ENCODE measurements at regions of chr11 and their contacts with region 1.

Region 1: GRCh38 chr11:66855574-66856495 is 1.0 kb upstream of the LRFN4 start:
- DNase-seq: peak; percentile 97
- ATAC-seq: peak; percentile 96

Region 2: DNA sequence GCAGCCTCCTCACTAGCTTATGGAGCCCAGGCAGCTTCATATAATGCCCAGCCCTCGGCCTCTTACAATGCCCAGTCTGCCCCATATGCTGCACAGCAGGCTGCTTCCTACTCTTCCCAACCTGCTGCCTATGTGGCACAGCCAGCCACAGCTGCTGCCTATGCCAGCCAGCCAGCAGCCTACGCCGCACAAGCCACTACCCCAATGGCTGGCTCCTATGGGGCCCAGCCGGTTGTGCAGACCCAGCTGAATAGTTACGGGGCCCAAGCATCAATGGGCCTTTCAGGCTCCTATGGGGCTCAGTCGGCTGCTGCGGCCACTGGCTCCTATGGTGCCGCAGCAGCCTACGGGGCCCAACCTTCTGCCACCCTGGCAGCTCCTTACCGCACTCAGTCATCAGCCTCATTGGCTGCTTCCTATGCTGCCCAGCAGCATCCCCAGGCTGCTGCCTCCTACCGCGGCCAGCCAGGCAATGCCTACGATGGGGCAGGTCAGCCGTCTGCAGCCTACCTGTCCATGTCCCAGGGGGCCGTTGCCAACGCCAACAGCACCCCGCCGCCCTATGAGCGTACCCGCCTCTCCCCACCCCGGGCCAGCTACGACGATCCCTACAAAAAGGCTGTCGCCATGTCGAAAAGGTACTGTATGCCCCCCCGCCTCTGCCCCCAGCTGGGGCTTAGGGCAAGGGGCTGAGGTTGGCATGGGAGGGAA is 230.6 kb before region 1 on chr11:
- intact Hi-C with region 1: no loop called
- DNase-seq: no peak
- ATAC-seq: no peak

Region 3: GRCh38 chr11:66958232-66958955 is 102.6 kb after region 1 on chr11 and contains the start of gene PC:
- intact Hi-C with region 1: loop called (anchors 5 kb)
- DNase-seq: peak; percentile 100
- ATAC-seq: peak; percentile 100
- total RNA-seq, gene PC: 7.5 TPM

Measured in Right ventricle myocardium inferior (tissue), 1 donor.